Prostate gland (tissue), 2 donors: ENCODE measurements at regions of chr17 and their contacts with region 1.

Region 1: DNA sequence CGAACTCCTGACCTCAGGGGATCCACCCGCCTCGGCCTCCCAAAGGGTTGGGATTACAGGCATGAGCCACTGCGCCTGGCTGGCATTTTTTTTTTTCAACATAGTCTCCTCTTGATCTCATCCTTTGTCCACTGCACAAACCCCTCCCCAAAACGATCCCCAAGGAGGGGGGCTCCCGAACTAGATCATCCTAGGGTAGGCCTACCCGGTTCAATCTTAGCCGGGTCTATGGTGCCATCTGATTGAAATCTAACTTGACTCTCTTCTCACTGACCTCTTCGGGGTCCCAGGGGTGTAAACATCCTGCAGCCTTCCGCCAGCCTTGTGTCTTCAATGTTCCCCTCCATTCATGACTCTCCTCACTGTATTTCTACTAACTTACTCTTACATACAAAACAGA is 140.5 kb upstream of the CRHR1 start:
- DNase-seq: no peak
- H3K4me3 ChIP-seq: no peak overlapping the region
- H3K27ac ChIP-seq: no peak overlapping the region
- H3K4me1 ChIP-seq: no peaks in the 10 kb centered on the region
- H3K27me3 ChIP-seq: no peaks in the 10 kb centered on the region
- CTCF ChIP-seq: no peak
- POLR2A ChIP-seq: no peak

Region 2: GRCh38 chr17:45705123-45706009 is 61.8 kb after region 1 on chr17:
- intact Hi-C with region 1: no loop called
- DNase-seq: peak; percentile 5
- H3K4me3 ChIP-seq: no peak overlapping the region
- H3K27ac ChIP-seq: no peak overlapping the region
- H3K4me1 ChIP-seq: no peaks in the 10 kb centered on the region
- H3K27me3 ChIP-seq: no peaks in the 10 kb centered on the region
- CTCF ChIP-seq: no peak
- POLR2A ChIP-seq: no peak

Region 3: DNA sequence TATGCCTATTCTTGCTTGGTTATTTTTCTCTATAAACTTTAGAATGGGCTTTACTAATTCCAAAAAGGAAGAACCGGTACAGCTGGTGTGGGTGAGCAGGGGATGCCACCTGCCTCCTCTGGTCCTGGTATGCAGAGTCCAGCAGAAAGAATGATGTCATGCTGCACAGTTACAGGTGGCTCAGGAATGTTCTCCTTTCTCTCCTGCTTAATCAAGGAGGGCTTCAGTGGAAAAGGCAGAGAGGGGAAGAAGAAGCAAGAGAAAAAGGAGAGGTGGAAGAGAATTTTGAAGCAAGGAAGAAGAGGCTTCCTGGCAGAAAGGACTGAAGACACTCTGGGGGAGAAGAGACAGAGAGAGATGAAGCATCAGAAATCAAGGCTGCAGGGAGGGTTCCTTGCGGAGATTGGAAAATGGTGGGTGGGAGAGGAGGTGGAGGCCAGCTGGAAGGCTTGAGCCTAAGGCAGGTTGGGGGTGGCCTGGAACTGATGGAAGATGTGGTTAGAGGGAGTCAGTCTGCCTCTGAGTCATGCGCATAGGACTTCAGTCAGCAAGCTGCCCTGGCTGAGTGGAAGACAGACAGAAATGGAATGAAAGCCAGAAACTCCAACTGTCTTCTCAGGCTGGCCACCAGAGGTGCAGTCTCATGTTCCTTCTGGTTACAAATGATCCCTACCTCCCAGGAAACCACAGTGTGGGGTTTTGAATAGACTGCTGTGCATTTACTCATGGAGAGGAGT is 75.9 kb after region 1 on chr17:
- intact Hi-C with region 1: no loop called
- DNase-seq: peak; percentile 13
- H3K4me3 ChIP-seq: no peak overlapping the region
- H3K27ac ChIP-seq: no peak overlapping the region
- H3K4me1 ChIP-seq: no peaks in the 10 kb centered on the region
- H3K27me3 ChIP-seq: peaks cover 3% of the 10 kb centered on the region
- CTCF ChIP-seq: peak in 1 of 4 experiments; percentile 66
- POLR2A ChIP-seq: no peak

Region 4: DNA sequence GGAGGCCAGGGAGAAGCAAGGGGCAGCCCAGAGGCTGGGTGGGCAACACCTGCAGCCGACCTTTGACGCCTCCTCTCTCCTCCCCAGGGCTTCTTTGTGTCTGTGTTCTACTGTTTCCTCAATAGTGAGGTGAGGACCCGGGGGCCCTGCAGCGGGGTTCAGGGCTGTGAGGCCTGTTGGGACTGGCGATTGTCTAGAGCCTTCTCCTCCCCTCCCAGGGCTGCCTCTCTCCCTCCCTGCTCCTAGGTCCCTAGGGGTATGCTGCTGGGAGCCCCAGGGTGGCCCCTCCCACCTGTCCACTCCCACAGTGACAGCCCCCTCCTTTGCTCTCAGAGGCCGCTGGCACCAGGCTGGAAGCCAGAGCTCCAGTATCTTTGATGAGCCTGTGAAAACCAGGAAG is 190.3 kb after region 1 on chr17:
- intact Hi-C with region 1: loop called (anchors 2 kb)
- DNase-seq: no peak
- H3K4me3 ChIP-seq: no peak overlapping the region
- H3K27ac ChIP-seq: no peak overlapping the region
- H3K4me1 ChIP-seq: no peaks in the 10 kb centered on the region
- H3K27me3 ChIP-seq: no peaks in the 10 kb centered on the region
- CTCF ChIP-seq: no peak
- POLR2A ChIP-seq: no peak